ENCODE measurements at regions of chr2 and their contacts with region 1.

Region 1: GRCh38 chr2:181742922-181743722 is 62.8 kb upstream of the NEUROD1 start:
- DNase-seq: no peak
- ATAC-seq: peak; percentile 63

Region 2: DNA sequence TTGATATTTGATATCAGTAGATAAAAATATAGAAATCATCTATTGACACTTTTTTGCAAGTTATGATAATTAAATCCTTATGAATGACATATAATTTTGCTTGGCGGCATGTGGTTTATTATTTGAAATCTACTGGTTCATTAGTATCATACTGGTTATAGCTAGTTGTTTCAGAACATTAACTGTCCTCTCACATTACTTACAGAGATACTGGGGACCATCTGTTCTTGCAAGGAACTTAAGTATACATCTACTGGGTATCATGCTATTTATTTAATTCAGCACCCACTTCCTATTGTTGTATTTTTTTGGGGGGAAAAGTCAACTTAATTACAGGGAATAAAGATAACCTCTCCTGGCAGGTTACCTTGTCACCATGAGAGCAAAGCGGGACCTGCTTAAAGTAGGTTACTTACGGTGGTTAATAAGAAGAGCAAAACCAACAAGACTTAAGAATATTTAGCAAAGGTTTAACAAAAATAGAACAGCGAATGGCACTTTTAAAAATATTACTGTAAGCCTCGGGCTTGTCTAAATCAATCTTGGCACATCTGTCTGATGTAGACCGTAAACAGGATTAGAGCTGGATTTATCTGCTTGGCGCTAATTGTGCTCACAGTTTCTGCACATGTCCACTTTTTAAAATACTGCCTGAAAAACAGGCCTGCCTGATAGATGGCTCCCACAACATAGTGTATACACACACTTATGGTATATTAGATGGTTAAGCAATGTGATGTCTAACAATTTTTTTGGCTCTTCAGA is 128.1 kb before region 1 on chr2:
- intact Hi-C with region 1: no loop called
- DNase-seq: no peak
- ATAC-seq: no peak

Region 3: DNA sequence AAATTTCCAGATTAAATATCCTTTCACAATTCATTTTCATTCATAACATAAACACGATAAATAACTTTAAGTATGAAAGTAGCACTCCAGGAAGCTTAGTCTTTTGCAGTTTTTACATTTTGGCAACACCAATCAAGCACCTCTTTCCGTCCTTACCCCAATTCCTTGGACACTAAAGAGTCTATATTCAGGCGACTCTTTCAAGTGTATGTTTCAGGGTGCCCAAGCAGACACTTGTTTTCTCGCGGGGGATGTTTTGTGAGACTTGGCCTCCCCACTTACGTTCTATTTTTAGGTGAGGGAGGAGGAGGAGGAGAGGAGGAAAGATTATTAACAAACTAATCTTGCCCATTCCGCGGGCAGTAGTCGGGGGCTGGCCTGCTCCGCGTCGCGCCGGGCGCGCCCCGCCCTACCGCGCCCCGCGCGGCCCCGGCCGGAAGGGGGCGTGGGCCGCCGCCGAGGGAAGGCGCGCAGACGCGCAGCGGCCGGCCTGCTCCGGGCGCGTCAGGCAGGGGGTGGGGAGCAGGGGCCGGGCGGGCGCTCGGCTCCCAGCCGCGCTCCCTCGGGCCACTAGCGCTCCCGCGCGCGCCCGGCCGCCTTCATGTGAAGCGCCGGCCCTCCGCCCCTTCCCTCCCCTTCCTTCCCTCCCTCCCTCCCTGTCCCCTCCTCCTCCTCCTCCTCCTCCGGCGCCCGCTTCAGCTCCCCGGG is 148.3 kb after region 1 on chr2 and contains the start of gene ITPRID2:
- intact Hi-C with region 1: loop called (anchors 5 kb)
- DNase-seq: peak; percentile 92
- ATAC-seq: peak; percentile 97
- total RNA-seq, gene ITPRID2: 65.6 TPM

Region 4: GRCh38 chr2:181953881-181954537 is 210.9 kb after region 1 on chr2:
- intact Hi-C with region 1: loop called (anchors 2 kb)
- DNase-seq: peak; percentile 46
- ATAC-seq: peak; percentile 74

Region 5: GRCh38 chr2:182077451-182078142 is 334.5 kb after region 1 on chr2:
- intact Hi-C with region 1: loop called (anchors 10 kb)
- DNase-seq: no peak
- ATAC-seq: peak; percentile 94